Endothelial cell of umbilical vein (primary cell): ENCODE measurements at regions of chr3 and their contacts with region 1.

Region 1: GRCh38 chr3:184543843-184544512 is 17.6 kb upstream of the EPHB3 start:
- DNase-seq: peak; percentile 70
- H3K4me3 ChIP-seq: no peak overlapping the region
- H3K27ac ChIP-seq: no peak overlapping the region
- H3K4me1 ChIP-seq: no peaks in the 10 kb centered on the region
- H3K27me3 ChIP-seq: peaks cover 5 to 6% of the 10 kb centered on the region in 2 experiments
- CTCF ChIP-seq: peak; percentile 69 to 85
- POLR2A ChIP-seq: no peak

Region 2: DNA sequence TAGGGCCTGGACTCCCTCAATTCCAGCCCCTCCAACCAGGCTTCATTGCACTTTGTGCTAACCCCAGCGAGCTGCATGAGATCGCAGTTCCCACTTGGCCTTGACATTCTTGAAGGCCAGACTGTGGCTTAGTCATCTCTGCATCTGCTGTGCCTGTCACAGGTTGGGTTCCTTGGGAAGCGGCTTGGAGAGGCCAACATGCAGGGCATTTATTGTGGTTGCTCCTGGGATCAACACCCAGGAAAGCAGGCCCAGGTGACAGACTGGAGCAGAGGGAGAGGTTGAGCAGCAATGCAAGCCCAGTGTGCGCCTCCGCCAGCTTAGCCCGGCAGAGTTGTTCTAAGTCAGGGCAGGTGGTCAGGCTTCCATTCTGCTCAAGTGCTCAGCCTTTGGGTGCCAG is 347.4 kb before region 1 on chr3:
- CTCF ChIA-PET with region 1: no interaction called
- POLR2A ChIA-PET with region 1: no interaction called
- dilution Hi-C with region 1: no loop called
- intact Hi-C with region 1: no loop called
- DNase-seq: no peak
- H3K4me3 ChIP-seq: no peak overlapping the region
- H3K27ac ChIP-seq: no peak overlapping the region
- H3K4me1 ChIP-seq: no peaks in the 10 kb centered on the region
- H3K27me3 ChIP-seq: no peaks in the 10 kb centered on the region
- CTCF ChIP-seq: no peak
- POLR2A ChIP-seq: no peak

Region 3: GRCh38 chr3:184354121-184354728 is 189.8 kb before region 1 on chr3:
- CTCF ChIA-PET with region 1: interaction called, 7 read pairs
- POLR2A ChIA-PET with region 1: no interaction called
- dilution Hi-C with region 1: no loop called
- intact Hi-C with region 1: loop called (anchors 1 kb)
- DNase-seq: peak; percentile 37
- H3K4me3 ChIP-seq: no peak overlapping the region
- H3K27ac ChIP-seq: no peak overlapping the region
- H3K4me1 ChIP-seq: no peaks in the 10 kb centered on the region
- H3K27me3 ChIP-seq: no peaks in the 10 kb centered on the region
- CTCF ChIP-seq: peak; percentile 63 to 91
- POLR2A ChIP-seq: no peak

Region 4: DNA sequence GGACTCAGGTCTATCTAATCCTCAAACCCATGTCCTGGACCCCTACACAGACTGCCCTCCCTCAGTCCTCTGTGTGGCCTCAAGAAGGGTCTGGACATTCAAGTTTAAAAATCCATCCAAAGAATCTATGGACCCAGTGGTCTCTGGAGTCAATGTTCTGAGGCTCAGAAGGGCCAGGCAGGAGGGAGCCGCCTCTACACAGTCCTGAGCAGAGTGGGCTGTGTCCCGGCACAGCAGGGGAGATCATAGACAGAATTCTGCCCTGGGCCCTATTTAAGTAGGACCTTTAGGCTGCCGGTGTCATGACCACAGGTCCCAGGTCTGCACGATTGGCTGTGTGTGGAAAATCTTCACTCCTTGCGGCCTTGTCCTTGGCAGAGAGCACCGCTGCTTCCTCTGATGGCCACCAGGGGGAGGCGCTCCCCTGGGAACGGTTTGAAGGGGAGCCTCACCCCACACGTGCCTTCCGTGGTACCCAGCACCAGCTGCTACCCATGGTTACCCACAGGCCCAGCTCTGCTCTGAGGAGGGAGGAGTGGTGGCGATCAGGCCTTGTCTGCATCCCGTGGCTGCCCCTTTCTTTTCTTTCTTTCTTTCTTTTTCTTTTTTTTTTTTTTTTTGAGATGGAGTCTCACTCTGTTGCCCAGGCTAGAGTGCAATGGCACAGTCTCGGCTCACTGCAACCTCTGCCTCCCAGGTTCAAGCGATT is 126.2 kb before region 1 on chr3:
- CTCF ChIA-PET with region 1: interaction called, 17 read pairs
- POLR2A ChIA-PET with region 1: no interaction called
- dilution Hi-C with region 1: no loop called
- intact Hi-C with region 1: loop called (anchors 1 kb)
- DNase-seq: peak; percentile 62
- H3K4me3 ChIP-seq: no peak overlapping the region
- H3K27ac ChIP-seq: no peak overlapping the region
- H3K4me1 ChIP-seq: no peaks in the 10 kb centered on the region
- H3K27me3 ChIP-seq: no peaks in the 10 kb centered on the region
- CTCF ChIP-seq: peak; percentile 88 to 98
- POLR2A ChIP-seq: no peak

Region 5: DNA sequence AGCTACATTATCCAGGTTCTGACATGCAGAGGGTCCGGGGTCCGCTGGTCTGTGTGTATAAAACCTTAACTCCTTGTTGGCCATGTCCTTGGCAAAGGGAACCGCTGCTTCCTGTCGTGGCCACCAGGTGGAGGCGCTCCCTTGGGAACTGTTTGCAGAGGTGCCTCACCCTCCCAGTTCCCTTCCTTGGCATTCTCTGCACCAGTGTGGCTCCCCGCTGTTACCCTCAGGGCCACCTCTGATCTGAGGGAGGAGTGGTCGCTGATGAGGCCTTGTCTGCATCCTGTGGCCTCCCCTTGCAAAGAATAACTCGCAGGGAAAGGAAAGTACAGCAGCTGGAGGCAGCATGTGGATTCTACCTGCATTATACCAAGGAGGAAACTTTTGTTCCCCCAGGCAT is 74.6 kb before region 1 on chr3:
- CTCF ChIA-PET with region 1: interaction called, 48 read pairs
- POLR2A ChIA-PET with region 1: no interaction called
- dilution Hi-C with region 1: no loop called
- intact Hi-C with region 1: loop called (anchors 1 kb)
- DNase-seq: peak; percentile 42
- H3K4me3 ChIP-seq: no peak overlapping the region
- H3K27ac ChIP-seq: no peak overlapping the region
- H3K4me1 ChIP-seq: peaks cover 17% of the 10 kb centered on the region
- H3K27me3 ChIP-seq: peaks cover 2 to 16% of the 10 kb centered on the region in 2 experiments
- CTCF ChIP-seq: peak; percentile 75 to 76
- POLR2A ChIP-seq: no peak

Region 6: DNA sequence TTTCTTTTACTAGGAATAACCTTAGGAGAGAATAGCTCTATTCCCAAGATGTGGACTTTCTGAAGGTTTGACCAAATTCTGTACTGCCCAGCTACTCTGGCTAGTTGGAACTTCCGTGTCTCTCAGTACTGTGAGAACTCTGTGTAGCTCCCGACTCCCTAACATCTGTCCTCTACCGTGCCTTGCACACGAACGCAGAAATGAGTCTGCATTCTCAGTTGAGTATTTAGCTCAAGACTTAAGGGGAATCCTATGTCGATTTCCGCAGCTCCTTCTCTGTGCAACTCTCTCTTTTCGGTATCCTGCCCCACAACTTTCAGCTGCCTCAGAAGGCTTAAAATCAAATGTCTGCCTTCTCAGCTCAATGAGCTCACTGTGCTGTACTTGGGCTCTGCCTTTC is 69.1 kb before region 1 on chr3:
- CTCF ChIA-PET with region 1: interaction called, 48 read pairs
- POLR2A ChIA-PET with region 1: no interaction called
- dilution Hi-C with region 1: no loop called
- intact Hi-C with region 1: no loop called
- DNase-seq: no peak
- H3K4me3 ChIP-seq: no peak overlapping the region
- H3K27ac ChIP-seq: no peak overlapping the region
- H3K4me1 ChIP-seq: peaks cover 13% of the 10 kb centered on the region
- H3K27me3 ChIP-seq: peaks cover 28 to 29% of the 10 kb centered on the region in 2 experiments
- CTCF ChIP-seq: no peak
- POLR2A ChIP-seq: no peak

Region 7: DNA sequence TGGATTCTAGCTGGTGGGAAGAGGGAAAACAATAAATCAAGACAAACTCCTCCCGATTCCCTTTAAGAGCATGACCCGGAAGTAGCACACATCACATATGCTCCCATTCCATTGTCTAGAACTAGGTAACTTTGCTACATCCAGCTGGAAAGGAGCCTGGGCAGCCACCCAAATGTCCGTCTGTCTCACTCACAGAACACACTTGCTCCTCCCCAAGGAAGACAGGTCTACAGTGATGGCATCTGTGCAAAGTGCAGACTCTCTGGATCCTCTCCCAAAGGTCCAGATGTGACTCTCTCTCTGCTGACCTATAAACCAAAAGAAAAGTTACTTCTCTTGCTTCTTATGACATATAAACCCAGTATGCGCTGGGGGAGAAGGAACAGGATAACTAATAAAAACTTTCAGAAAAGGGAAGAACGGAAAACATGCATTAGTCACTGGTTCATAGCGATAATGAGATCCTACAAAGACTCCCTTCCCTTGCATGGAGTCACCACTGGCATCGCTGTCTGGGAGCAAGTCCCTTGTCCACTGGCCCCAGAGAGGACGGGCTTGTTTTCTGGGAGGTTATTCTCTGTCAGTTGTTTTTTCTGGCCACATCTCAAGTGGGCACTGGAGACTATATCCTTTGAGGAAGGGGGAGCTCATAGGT is 12.2 kb before region 1 on chr3:
- CTCF ChIA-PET with region 1: interaction called, 24 read pairs
- POLR2A ChIA-PET with region 1: no interaction called
- dilution Hi-C with region 1: no loop called
- intact Hi-C with region 1: no loop called
- DNase-seq: peak; percentile 41
- H3K4me3 ChIP-seq: peak overlapping the region in 1 of 3 experiments; percentile 19
- H3K27ac ChIP-seq: no peak overlapping the region
- H3K4me1 ChIP-seq: peaks cover 10% of the 10 kb centered on the region
- H3K27me3 ChIP-seq: peaks cover 5 to 11% of the 10 kb centered on the region in 2 experiments
- CTCF ChIP-seq: no peak
- POLR2A ChIP-seq: no peak

Region 8: GRCh38 chr3:184620475-184621119 is 76.6 kb after region 1 on chr3:
- CTCF ChIA-PET with region 1: no interaction called
- POLR2A ChIA-PET with region 1: no interaction called
- dilution Hi-C with region 1: no loop called
- intact Hi-C with region 1: no loop called
- DNase-seq: peak; percentile 63
- H3K4me3 ChIP-seq: no peak overlapping the region
- H3K27ac ChIP-seq: peak overlapping the region; percentile 30
- H3K4me1 ChIP-seq: peaks cover 21% of the 10 kb centered on the region
- H3K27me3 ChIP-seq: peaks cover 5% of the 10 kb centered on the region in 2 experiments
- CTCF ChIP-seq: no peak
- POLR2A ChIP-seq: no peak

Region 9: DNA sequence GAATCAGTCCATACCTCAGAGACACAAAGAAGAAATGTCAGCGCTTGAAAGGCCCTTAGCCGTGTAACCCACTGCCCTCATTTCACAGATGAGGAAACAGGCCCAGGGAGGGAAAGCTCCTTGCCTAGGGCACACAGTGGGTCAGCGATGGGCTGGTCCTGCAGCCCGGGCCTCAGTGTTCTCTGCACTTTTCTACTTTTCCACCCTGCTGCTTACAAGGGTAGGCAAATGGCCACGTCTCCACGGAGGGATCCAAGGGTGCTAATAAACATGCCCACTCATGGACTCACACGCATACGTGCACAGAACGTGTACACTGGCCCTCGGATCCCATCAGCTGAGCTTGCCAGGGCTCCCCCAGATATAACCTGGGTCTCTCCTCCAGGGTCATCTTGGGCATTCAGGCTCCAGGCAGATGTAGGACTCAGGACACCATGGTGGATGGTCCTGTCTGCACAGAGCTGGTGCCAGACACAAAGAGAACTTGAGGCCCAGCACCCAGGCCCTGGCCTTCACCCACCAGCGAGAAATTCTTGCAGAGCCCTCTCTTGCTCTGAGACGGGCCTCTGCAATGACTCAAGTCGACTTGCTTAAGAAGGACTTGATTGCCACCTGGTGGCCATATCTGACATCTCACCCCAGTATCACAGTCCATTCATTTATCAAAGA is 233.5 kb after region 1 on chr3:
- CTCF ChIA-PET with region 1: interaction called, 13 read pairs
- POLR2A ChIA-PET with region 1: no interaction called
- dilution Hi-C with region 1: no loop called
- intact Hi-C with region 1: no loop called
- DNase-seq: peak; percentile 85
- H3K4me3 ChIP-seq: no peak overlapping the region
- H3K27ac ChIP-seq: no peak overlapping the region
- H3K4me1 ChIP-seq: no peaks in the 10 kb centered on the region
- H3K27me3 ChIP-seq: peaks cover 0 to 12% of the 10 kb centered on the region in 2 experiments
- CTCF ChIP-seq: peak; percentile 67 to 75
- POLR2A ChIP-seq: no peak